ENCODE measurements at regions of chr1 and their contacts with region 1.

Region 1: DNA sequence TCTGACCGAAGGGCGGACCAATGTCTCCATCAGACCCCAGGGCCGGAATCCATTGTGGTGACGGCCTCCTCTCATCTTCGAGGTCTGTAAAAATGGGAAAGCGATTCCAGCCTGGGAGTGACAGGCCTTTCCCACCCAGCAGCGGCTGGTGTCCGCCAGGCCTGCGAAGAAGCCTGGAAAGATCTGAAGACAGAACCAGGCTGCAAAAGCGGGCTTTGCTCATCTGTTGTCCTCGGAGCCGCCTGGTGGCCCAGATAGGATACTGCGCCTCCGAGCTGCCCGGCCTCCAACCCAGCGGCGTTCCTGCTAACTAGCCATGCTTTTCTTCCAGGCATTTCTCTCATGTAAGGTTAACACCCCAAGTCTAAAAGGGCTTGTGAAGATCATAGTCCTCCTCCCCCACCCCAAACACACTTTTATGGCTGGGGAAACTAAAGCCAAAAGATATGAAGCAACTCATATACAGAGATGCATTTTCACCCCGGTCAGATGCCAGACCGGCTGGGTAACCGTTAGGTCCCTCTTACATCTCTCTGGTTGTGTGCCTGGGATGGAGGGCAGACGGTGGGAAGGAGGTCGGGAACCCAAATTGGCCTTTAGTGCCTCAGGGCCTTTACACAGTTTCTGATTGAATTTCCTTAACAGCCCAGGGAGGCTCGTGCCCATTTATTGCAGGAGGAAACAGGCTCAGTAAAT is 1.9 kb upstream of the DHRS3 start:
- DNase-seq: peak; percentile 84

Region 2: GRCh38 chr1:12477936-12478611 is 141.9 kb before region 1 on chr1:
- CTCF ChIA-PET with region 1: no interaction called
- POLR2A ChIA-PET with region 1: interaction called, 18 read pairs
- DNase-seq: peak; percentile 76

Region 3: GRCh38 chr1:12539705-12540579 is 80.0 kb before region 1 on chr1:
- CTCF ChIA-PET with region 1: no interaction called
- POLR2A ChIA-PET with region 1: interaction called, 12 read pairs
- DNase-seq: peak; percentile 72

Region 4: DNA sequence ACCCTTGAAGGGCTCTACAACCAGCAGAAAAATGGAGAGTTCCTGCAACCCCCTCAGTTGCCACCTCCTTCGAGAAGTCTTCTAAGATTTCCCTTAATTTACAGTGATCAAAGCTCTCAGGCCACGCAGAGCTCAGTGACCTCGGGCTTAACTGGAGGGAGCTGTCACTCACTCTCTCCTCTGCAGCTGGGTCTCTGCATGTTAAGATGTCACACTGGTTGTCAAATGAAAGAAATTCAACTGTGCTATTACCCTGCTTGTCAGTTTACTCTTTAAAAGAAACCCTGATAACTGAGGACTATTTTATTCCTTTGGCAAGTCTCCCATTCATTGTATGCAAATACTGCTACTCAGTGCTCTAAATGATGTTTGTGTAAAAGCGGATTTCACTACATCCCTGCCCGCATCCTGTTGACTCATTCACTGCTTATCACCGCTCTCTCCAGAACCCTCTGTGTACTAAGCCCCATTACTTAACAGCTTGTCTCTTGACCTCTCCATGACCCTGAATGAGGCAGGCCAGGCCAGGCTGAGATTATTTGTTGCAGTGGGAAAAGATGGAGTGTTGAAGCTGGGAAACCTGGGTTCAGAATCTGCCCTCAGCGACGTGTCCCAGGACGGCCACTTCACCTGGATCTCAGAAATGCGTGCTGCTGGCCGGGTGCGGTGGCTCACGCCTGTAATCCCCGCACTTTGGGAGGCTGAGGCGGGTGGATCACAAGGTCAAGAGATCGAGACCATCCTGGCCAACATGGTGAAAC is 15.6 kb before region 1 on chr1:
- CTCF ChIA-PET with region 1: interaction called, 7 read pairs
- POLR2A ChIA-PET with region 1: interaction called, 32 read pairs
- DNase-seq: no peak

Measured in HEK293T (cell line).